ENCODE measurements at regions of chr18 and their contacts with region 1.

Region 1: DNA sequence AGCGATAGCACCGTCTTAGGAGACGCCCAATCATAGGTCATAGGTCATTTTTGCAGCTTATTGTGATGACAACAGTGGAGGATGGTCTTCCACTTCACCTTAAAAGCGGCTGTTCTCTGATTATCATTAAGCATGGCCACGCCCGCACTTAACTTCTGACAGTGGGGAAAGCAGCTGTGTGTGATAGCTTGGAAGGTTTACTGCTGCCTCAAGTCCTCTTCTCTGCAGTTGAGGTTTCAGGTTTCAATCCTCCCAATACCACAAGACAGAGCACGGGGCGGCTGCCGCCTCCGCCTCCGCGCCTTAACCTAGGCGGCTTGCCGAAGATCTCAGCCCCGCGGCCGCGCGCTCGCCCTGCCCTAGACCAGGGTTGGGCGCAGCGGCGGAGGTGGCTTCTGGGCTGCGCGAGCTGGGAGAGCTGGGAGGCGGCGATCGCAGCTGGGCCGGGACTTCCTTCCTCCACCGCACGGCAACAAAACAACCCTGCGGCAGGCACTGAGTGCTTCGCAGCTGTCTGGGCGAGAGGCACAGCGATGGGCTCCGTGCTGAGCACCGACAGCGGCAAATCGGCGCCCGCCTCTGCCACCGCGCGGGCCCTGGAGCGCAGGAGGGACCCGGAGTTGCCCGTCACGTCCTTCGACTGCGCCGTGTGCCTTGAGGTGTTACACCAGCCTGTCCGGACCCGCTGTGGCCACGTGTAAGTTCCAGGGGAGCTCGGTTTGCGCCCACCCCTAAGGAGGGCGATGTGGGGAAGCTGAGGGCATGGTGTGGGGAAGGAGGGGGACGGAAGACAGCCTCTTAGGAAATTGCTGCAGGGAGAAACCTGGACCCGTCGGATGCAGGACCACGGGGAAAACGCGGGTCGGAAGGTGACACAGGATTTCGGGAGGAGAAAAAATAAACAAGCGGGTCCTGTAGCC is at the start of gene RNF125:
- DNase-seq: peak; percentile 90
- H3K4me3 Mint-ChIP-seq: peak within 1 kb of the TSS; percentile 99
- H3K27ac Mint-ChIP-seq: peak within 1 kb of the TSS; percentile 99
- H3K4me1 Mint-ChIP-seq: peaks cover 50% of the 10 kb centered on the region
- H3K27me3 Mint-ChIP-seq: peaks cover 2% of the 10 kb centered on the region
- total RNA-seq, gene RNF125: 32.2 and 34.6 TPM in 2 replicates

Region 2: GRCh38 chr18:31942999-31943865 is 75.4 kb before region 1 on chr18 and contains the start of gene TRAPPC8:
- intact Hi-C with region 1: loop called (anchors 1 kb)
- DNase-seq: peak; percentile 86
- H3K4me3 Mint-ChIP-seq: peak within 1 kb of the TSS; percentile 97
- H3K27ac Mint-ChIP-seq: peak within 1 kb of the TSS; percentile 95
- H3K4me1 Mint-ChIP-seq: peaks cover 40% of the 10 kb centered on the region
- H3K27me3 Mint-ChIP-seq: no peaks in the 10 kb centered on the region
- total RNA-seq, gene TRAPPC8: 36.7 and 41.6 TPM in 2 replicates

Region 3: GRCh38 chr18:32048507-32049091 is 30.0 kb after region 1 on chr18:
- intact Hi-C with region 1: loop called (anchors 1 kb)
- DNase-seq: peak; percentile 6
- H3K4me3 Mint-ChIP-seq: peak overlapping the region; percentile 30
- H3K27ac Mint-ChIP-seq: peak overlapping the region; percentile 84
- H3K4me1 Mint-ChIP-seq: peaks cover 30% of the 10 kb centered on the region
- H3K27me3 Mint-ChIP-seq: no peaks in the 10 kb centered on the region

Region 4: GRCh38 chr18:32092422-32093101 is 74.0 kb after region 1 on chr18:
- intact Hi-C with region 1: loop called (anchors 1 kb)
- DNase-seq: peak; percentile 99
- H3K4me3 Mint-ChIP-seq: peak overlapping the region; percentile 95
- H3K27ac Mint-ChIP-seq: peak overlapping the region; percentile 95
- H3K4me1 Mint-ChIP-seq: peaks cover 41% of the 10 kb centered on the region
- H3K27me3 Mint-ChIP-seq: peaks cover 3% of the 10 kb centered on the region

Region 5: DNA sequence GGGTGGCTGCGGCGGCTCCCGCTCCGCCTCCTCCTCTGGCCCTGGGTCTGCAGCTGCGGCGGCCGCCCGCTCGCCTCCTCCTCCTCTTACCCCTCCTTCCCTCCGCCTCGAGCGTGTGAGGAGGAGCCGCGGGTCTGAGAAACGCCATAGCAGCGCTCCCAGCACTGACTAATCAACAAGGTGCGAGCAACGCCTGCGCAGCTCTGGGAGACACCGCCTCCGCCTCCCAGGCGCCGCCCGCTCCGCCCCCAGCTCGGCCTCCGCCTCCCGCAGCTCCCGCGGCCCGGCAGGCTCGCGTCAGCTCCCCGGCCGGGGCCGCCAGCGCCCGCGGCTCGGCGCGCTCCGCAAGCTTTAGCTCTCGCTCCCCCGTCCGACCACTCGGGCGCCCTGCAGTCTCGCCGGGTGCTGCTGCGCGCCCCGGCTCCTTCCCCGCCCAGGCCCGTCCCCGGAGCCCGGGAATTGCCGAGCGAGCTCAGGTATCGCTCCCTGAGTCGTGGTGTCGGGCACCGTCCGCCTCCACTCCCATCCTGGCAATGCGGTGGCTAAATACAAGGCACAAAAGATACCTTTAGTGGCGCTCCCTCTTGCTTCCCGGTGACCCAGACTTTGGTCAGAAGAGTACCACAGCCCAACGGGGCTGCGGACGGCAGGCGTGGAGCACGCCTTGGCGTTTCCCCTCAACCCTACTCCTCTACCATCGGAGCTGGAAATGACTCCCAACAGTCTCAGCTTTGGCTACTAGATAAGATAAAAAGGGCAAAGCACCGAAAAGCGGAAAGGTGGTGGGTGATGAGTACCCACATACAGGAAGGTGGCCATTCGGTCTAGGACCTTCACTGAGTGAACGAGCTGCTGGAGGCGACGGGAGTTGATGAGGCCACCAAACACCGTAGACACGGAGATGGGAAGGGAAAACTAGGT is 452.4 kb after region 1 on chr18 and contains the start of gene GAREM1:
- intact Hi-C with region 1: loop called (anchors 2 kb)
- DNase-seq: peak; percentile 79
- H3K4me3 Mint-ChIP-seq: peak within 1 kb of the TSS; percentile 81
- H3K27ac Mint-ChIP-seq: no peak within 1 kb of the TSS
- H3K4me1 Mint-ChIP-seq: peaks cover 31% of the 10 kb centered on the region
- H3K27me3 Mint-ChIP-seq: peaks cover 63% of the 10 kb centered on the region
- total RNA-seq, gene GAREM1: not detected in 2 replicates

Measured in activated T-helper 1 cell treated with anti-CD3 and anti-CD28 coated beads, Interleukin-12 subunit alpha, Interleukin-12 subunit beta, Interleukin-2, Interleukin-4 antibody, amounts not matched to agents 30 ng/mL and 10 ng/mL and 1 ng/mL, durations not matched to agents 14 hours and 24 hours and 36 hours (primary cell).